GM12878 (cell line): ENCODE measurements at regions of chr12 and their contacts with region 1.

Region 1: GRCh38 chr12:75505706-75506312 is 5.6 kb downstream of the KRR1 start:
- DNase-seq: no peak
- ATAC-seq: peak; percentile 50
- H3K4me3 ChIP-seq: no peak overlapping the region
- H3K27ac ChIP-seq: no peak overlapping the region
- H3K4me1 ChIP-seq: no peaks in the 10 kb centered on the region; the same call in 1 of the 2 replicates
- H3K27me3 ChIP-seq: no peaks in the 10 kb centered on the region
- CTCF ChIP-seq: peak; percentile 55 to 69 (median 63); a peak in 5 of 6 replicates
- EP300 ChIP-seq: no peak
- POLR2A ChIP-seq: no peak
- RAD21 ChIP-seq: peak; percentile 56

Region 2: GRCh38 chr12:75334384-75335030 is 171.3 kb before region 1 on chr12 and contains the start of gene GLIPR1L1:
- CTCF ChIA-PET with region 1: interaction called, 50 read pairs
- POLR2A ChIA-PET with region 1: interaction called, 3 read pairs
- RAD21 ChIA-PET with region 1: interaction called, 17 read pairs
- SMC1A ChIA-PET with region 1: interaction called, 19 read pairs
- in situ Hi-C with region 1: loop called (anchors 5 kb)
- intact Hi-C with region 1: loop called (anchors 1 kb)
- DNase-seq: peak; percentile 44
- ATAC-seq: peak; percentile 83
- H3K4me3 ChIP-seq: peak within 1 kb of the TSS; percentile 57; the same call in 1 of the 2 replicates
- H3K27ac ChIP-seq: no peak within 1 kb of the TSS
- H3K4me1 ChIP-seq: peaks cover 4% of the 10 kb centered on the region
- H3K27me3 ChIP-seq: no peaks in the 10 kb centered on the region
- CTCF ChIP-seq: peak; percentile 83 to 90 (median 89)
- EP300 ChIP-seq: no peak
- POLR2A ChIP-seq: no peak
- RAD21 ChIP-seq: peak; percentile 87
- polyA plus RNA-seq, gene GLIPR1L1: 0.10 to 0.13 TPM

Region 3: GRCh38 chr12:75390899-75391538 is 114.8 kb before region 1 on chr12 and contains the start of gene GLIPR1L2:
- CTCF ChIA-PET with region 1: interaction called, 14 read pairs
- POLR2A ChIA-PET with region 1: no interaction called
- RAD21 ChIA-PET with region 1: interaction called, 18 read pairs
- SMC1A ChIA-PET with region 1: interaction called, 13 read pairs
- in situ Hi-C with region 1: no loop called
- intact Hi-C with region 1: loop called (anchors 1 kb)
- DNase-seq: peak; percentile 86
- ATAC-seq: peak; percentile 98
- H3K4me3 ChIP-seq: peak within 1 kb of the TSS; percentile 62
- H3K27ac ChIP-seq: peak within 1 kb of the TSS; percentile 91
- H3K4me1 ChIP-seq: peaks cover 7% of the 10 kb centered on the region
- H3K27me3 ChIP-seq: no peaks in the 10 kb centered on the region
- CTCF ChIP-seq: peak; percentile 79 to 91 (median 90)
- EP300 ChIP-seq: no peak
- POLR2A ChIP-seq: peak; percentile 76
- RAD21 ChIP-seq: peak; percentile 57
- polyA plus RNA-seq, gene GLIPR1L2: 0.04 TPM in 1 of 2 experiments, not detected in the other

Region 4: GRCh38 chr12:75437564-75437963 is 68.2 kb before region 1 on chr12:
- CTCF ChIA-PET with region 1: interaction called, 15 read pairs
- POLR2A ChIA-PET with region 1: no interaction called
- RAD21 ChIA-PET with region 1: interaction called, 4 read pairs
- SMC1A ChIA-PET with region 1: interaction called, 3 read pairs
- in situ Hi-C with region 1: no loop called
- intact Hi-C with region 1: loop called (anchors 5 kb)
- DNase-seq: no peak
- ATAC-seq: peak; percentile 93
- H3K4me3 ChIP-seq: no peak overlapping the region
- H3K27ac ChIP-seq: no peak overlapping the region
- H3K4me1 ChIP-seq: no peaks in the 10 kb centered on the region
- H3K27me3 ChIP-seq: no peaks in the 10 kb centered on the region
- CTCF ChIP-seq: peak; percentile 35 to 42 (median 41); a peak in 3 of 6 replicates
- EP300 ChIP-seq: no peak
- POLR2A ChIP-seq: no peak
- RAD21 ChIP-seq: peak; percentile 48

Region 5: GRCh38 chr12:75489613-75490210 is 16.1 kb before region 1 on chr12:
- CTCF ChIA-PET with region 1: interaction called, 235 read pairs
- POLR2A ChIA-PET with region 1: interaction called, 11 read pairs
- RAD21 ChIA-PET with region 1: interaction called, 35 read pairs
- SMC1A ChIA-PET with region 1: interaction called, 151 read pairs
- in situ Hi-C with region 1: no loop called
- intact Hi-C with region 1: no loop called
- DNase-seq: no peak
- ATAC-seq: peak; percentile 76
- H3K4me3 ChIP-seq: no peak overlapping the region; the same call in 1 of the 2 replicates
- H3K27ac ChIP-seq: no peak overlapping the region
- H3K4me1 ChIP-seq: no peaks in the 10 kb centered on the region
- H3K27me3 ChIP-seq: no peaks in the 10 kb centered on the region
- CTCF ChIP-seq: no peak
- EP300 ChIP-seq: no peak
- POLR2A ChIP-seq: no peak
- RAD21 ChIP-seq: no peak

Region 6: GRCh38 chr12:75585330-75585729 is 79.5 kb after region 1 on chr12:
- CTCF ChIA-PET with region 1: no interaction called
- POLR2A ChIA-PET with region 1: no interaction called
- RAD21 ChIA-PET with region 1: no interaction called
- SMC1A ChIA-PET with region 1: no interaction called
- in situ Hi-C with region 1: no loop called
- intact Hi-C with region 1: no loop called
- DNase-seq: no peak
- ATAC-seq: no peak
- H3K4me3 ChIP-seq: no peak overlapping the region
- H3K27ac ChIP-seq: no peak overlapping the region
- H3K4me1 ChIP-seq: no peaks in the 10 kb centered on the region
- H3K27me3 ChIP-seq: no peaks in the 10 kb centered on the region
- CTCF ChIP-seq: no peak
- EP300 ChIP-seq: no peak
- POLR2A ChIP-seq: no peak
- RAD21 ChIP-seq: no peak